H1 (cell line): ENCODE measurements at regions of chr4 and their contacts with region 1.

Region 1: DNA sequence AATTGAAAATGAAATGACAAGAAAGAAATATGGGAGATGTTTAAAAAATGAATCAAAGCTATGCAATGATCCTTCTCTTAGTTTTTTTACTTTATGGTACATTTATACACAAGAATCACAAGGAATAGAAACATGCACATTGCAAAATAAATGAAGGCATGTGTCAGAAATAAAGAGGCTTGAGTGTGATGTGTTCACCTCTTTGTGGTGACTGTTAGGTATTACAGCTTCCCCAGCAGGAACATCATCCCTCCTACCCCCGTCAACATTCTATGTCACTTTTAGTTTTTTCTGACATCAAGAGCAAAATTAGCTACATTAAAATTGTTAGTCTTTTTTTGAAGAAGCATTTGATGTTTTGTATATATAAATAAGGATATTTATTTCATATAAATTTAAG is 214.8 kb downstream of the SLC4A4 start:
- DNase-seq: no peak
- H3K4me3 ChIP-seq: no peak overlapping the region
- H3K27ac ChIP-seq: no peak overlapping the region
- H3K4me1 ChIP-seq: no peaks in the 10 kb centered on the region; a peak in 1 of 7 replicates
- H3K27me3 ChIP-seq: no peaks in the 10 kb centered on the region
- CTCF ChIP-seq: peak in 2 of 3 experiments; percentile 32 to 66; a peak in 2 of 4 replicates
- EP300 ChIP-seq: no peak
- POLR2A ChIP-seq: no peak
- RAD21 ChIP-seq: peak; percentile 77 to 80

Region 2: GRCh38 chr4:71283642-71284257 is 269.9 kb before region 1 on chr4:
- CTCF ChIA-PET with region 1: no interaction called
- POLR2A ChIA-PET with region 1: no interaction called
- DNase-seq: no peak
- H3K4me3 ChIP-seq: no peak overlapping the region
- H3K27ac ChIP-seq: no peak overlapping the region
- H3K4me1 ChIP-seq: peaks cover 0 to 6% (median 1%) of the 10 kb centered on the region in 4 experiments; a peak in 2 of 7 replicates
- H3K27me3 ChIP-seq: no peaks in the 10 kb centered on the region
- CTCF ChIP-seq: no peak
- EP300 ChIP-seq: no peak
- POLR2A ChIP-seq: no peak
- RAD21 ChIP-seq: no peak

Region 3: GRCh38 chr4:71472946-71473345 is 80.7 kb before region 1 on chr4:
- CTCF ChIA-PET with region 1: no interaction called
- POLR2A ChIA-PET with region 1: no interaction called
- DNase-seq: no peak
- H3K4me3 ChIP-seq: no peak overlapping the region
- H3K27ac ChIP-seq: no peak overlapping the region
- H3K4me1 ChIP-seq: no peaks in the 10 kb centered on the region; a peak in 1 of 7 replicates
- H3K27me3 ChIP-seq: peaks cover 0 to 1% (median 0%) of the 10 kb centered on the region in 4 experiments; a peak in 1 of 7 replicates
- CTCF ChIP-seq: no peak
- EP300 ChIP-seq: no peak
- POLR2A ChIP-seq: no peak
- RAD21 ChIP-seq: no peak

Region 4: DNA sequence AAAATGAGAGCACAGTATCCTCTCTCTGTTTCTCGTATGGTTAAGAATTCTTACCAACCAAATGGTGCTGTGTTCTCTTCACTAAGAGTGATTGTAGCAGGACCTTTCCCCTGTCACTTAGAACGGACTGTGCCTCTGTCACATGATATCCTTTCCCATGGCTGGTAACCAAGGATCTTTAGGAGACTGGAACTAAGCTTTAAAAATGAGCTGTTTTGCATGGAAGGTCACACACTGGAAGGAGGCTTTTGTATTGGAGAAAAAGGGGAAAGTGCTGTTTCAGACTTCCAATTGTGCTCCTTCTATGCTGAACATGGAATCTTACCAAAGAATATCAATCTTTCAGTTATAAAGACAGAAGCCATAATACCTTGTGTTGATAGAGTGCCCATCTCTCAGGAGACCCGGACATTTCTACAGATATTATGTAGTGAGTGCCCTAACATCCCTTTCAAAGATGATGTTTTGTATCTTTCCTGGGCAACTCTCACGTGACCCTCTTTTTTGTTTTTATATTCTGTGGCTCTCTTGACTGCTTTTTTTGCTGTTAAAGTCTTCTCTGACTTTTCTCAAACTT is 66.2 kb before region 1 on chr4:
- CTCF ChIA-PET with region 1: no interaction called
- POLR2A ChIA-PET with region 1: no interaction called
- DNase-seq: no peak
- H3K4me3 ChIP-seq: no peak overlapping the region
- H3K27ac ChIP-seq: no peak overlapping the region
- H3K4me1 ChIP-seq: no peaks in the 10 kb centered on the region
- H3K27me3 ChIP-seq: no peaks in the 10 kb centered on the region
- CTCF ChIP-seq: no peak
- EP300 ChIP-seq: no peak
- POLR2A ChIP-seq: no peak
- RAD21 ChIP-seq: no peak

Region 5: GRCh38 chr4:71501992-71502391 is 51.6 kb before region 1 on chr4:
- CTCF ChIA-PET with region 1: no interaction called
- POLR2A ChIA-PET with region 1: no interaction called
- DNase-seq: no peak
- H3K4me3 ChIP-seq: no peak overlapping the region
- H3K27ac ChIP-seq: no peak overlapping the region
- H3K4me1 ChIP-seq: no peaks in the 10 kb centered on the region
- H3K27me3 ChIP-seq: no peaks in the 10 kb centered on the region
- CTCF ChIP-seq: no peak
- EP300 ChIP-seq: no peak
- POLR2A ChIP-seq: no peak
- RAD21 ChIP-seq: no peak

Region 6: GRCh38 chr4:71540749-71541269 is 12.8 kb before region 1 on chr4:
- CTCF ChIA-PET with region 1: interaction called, 10 read pairs
- POLR2A ChIA-PET with region 1: no interaction called
- DNase-seq: no peak
- H3K4me3 ChIP-seq: no peak overlapping the region
- H3K27ac ChIP-seq: no peak overlapping the region
- H3K4me1 ChIP-seq: 0 out of 7 replicates have a peak, but pooled peaks cover 0 to 2% (median 0%) of the 10 kb centered on the region in 4 experiments
- H3K27me3 ChIP-seq: no peaks in the 10 kb centered on the region
- CTCF ChIP-seq: peak in 2 of 3 experiments; percentile 9 to 11; a peak in 2 of 4 replicates
- EP300 ChIP-seq: no peak
- POLR2A ChIP-seq: no peak
- RAD21 ChIP-seq: no peak; a peak in 1 of 4 replicates

Region 7: DNA sequence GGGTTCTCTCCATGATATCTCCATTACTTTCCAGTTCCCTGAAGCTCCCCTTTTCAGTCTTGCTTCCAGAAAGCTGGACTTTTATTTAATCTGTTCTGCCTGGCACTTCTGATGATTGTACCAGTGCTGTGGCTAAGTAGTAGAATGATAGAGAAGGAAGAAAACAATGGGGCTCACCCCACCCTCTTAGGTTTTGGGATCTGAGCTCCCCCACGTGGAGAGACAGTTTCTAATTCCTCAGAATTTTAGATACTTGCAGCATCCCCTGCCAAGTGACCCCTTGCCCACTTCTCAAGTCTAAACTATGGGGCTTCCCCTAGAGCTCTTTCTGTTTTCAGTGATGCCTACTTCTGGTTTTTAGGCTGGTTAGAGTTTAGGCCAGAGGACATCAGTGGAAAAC is 156.4 kb after region 1 on chr4:
- CTCF ChIA-PET with region 1: interaction called, 13 read pairs
- POLR2A ChIA-PET with region 1: no interaction called
- DNase-seq: no peak
- H3K4me3 ChIP-seq: no peak overlapping the region
- H3K27ac ChIP-seq: no peak overlapping the region
- H3K4me1 ChIP-seq: no peaks in the 10 kb centered on the region
- H3K27me3 ChIP-seq: no peaks in the 10 kb centered on the region
- CTCF ChIP-seq: peak in 2 of 3 experiments; percentile 29 to 37; a peak in 3 of 4 replicates
- EP300 ChIP-seq: no peak
- POLR2A ChIP-seq: no peak
- RAD21 ChIP-seq: peak; percentile 65 to 73